ENCODE measurements at regions of chr1 and their contacts with region 1.

Region 1: DNA sequence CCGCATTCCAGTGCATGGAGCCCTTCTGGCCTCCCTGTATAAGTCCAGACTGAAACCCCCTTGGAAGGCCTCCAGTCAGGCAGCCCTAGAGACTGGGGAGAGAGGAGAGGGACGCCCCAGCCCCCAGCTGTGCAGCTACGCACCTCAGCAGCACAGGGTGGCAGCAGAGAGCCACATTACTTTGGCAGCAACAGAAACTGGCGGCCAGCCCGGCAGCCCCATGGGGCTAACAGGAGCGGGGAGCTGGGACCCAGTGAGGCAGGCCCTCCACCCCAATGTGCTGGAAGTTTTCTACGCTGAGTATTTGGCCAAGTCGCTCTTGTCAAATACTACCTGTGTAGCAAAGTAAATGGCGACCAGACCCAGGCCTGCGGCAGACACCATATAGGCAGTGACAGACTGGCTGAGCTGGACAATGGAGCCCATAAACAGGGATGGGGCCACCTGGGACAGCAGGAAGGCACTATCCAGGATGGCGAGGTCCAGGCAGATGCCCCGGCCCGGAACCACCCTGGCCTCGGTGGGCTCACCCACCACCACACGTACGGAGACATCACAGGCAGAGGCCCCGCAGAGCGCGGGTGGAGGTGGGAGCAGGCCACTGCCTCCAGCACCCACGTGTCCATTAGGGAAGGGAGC is 21.2 kb downstream of the SLC45A3 start:
- DNase-seq: peak; percentile 90
- H3K4me3 Mint-ChIP-seq: no peak overlapping the region
- H3K27ac Mint-ChIP-seq: no peak overlapping the region
- H3K4me1 Mint-ChIP-seq: peaks cover 1% of the 10 kb centered on the region
- H3K27me3 Mint-ChIP-seq: no peaks in the 10 kb centered on the region
- CTCF ChIP-seq: peak; percentile 99

Region 2: GRCh38 chr1:205344066-205344928 is 314.8 kb before region 1 on chr1:
- CTCF ChIA-PET with region 1: no interaction called
- POLR2A ChIA-PET with region 1: no interaction called
- intact Hi-C with region 1: no loop called
- DNase-seq: no peak
- H3K4me3 Mint-ChIP-seq: peak overlapping the region; percentile 50
- H3K27ac Mint-ChIP-seq: no peak overlapping the region
- H3K4me1 Mint-ChIP-seq: peaks cover 18% of the 10 kb centered on the region
- H3K27me3 Mint-ChIP-seq: peaks cover 12% of the 10 kb centered on the region
- CTCF ChIP-seq: no peak

Region 3: DNA sequence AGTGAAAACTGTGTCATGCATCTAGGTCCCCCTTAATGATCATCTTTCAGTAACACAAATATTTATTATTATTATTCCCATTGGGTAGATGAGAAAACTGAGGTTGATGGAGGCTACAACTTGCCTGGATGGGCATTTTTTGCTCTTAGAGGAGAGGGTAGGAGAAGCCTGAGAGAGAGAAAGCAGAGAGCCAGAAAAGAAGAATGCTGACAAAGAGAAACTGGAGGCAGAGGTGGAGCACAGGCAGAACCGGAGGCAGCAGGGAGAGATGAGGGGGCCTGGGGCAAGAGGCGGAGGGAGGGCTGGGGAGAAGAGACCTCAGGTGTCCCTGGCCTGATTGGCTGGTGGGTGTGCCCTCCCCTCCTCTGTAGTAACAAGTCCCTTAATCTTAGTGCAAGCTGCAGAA is 207.3 kb before region 1 on chr1:
- CTCF ChIA-PET with region 1: no interaction called
- POLR2A ChIA-PET with region 1: no interaction called
- intact Hi-C with region 1: no loop called
- DNase-seq: no peak
- H3K4me3 Mint-ChIP-seq: no peak overlapping the region
- H3K27ac Mint-ChIP-seq: no peak overlapping the region
- H3K4me1 Mint-ChIP-seq: peaks cover 45% of the 10 kb centered on the region
- H3K27me3 Mint-ChIP-seq: peaks cover 58% of the 10 kb centered on the region
- CTCF ChIP-seq: no peak

Region 4: DNA sequence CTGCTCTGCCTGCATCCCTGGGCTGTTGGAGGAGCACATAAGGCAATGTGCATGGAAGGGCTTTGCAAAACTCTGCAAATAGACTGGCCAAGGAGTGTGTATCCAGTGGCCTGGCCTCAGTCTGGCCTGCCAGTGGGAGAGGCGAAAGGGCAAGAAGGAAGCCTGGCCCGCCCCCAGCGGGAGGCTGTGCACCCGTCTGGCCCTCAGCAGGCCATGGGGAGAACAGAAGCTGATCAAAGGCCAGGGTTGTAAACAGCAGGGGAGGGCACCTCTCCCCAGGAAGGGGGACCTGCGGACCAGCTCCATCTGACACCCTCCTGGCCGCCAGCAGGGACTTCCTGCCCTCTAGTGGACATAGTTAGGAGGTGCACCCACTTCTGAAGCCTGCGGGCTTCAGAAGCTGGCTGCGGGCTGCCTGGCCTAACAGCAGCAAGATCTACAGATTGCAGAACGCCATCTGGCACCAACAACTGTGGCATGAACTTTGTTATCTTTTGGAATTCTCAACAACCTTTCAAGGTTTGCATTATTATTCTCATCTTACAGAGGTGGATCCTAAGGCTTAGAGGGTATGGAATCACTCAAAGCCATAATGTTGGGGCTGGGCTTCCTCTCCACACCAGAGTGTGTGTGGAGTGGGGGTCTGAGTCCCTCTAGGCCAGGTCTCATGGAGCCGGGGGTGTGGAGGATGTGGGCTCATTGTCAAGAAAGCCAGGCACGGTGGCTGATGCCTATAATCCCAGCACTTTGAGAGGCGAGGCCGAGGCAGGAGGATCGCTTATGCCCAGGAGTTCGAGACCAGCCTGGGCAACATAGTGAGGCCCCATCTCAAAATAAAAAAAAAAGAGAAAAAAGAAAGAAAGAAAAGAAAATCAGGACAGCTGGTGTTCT is 173.5 kb before region 1 on chr1:
- CTCF ChIA-PET with region 1: interaction called, 109 read pairs
- POLR2A ChIA-PET with region 1: no interaction called
- intact Hi-C with region 1: loop called (anchors 1 kb)
- DNase-seq: peak; percentile 88
- H3K4me3 Mint-ChIP-seq: no peak overlapping the region
- H3K27ac Mint-ChIP-seq: no peak overlapping the region
- H3K4me1 Mint-ChIP-seq: peaks cover 14% of the 10 kb centered on the region
- H3K27me3 Mint-ChIP-seq: peaks cover 42% of the 10 kb centered on the region
- CTCF ChIP-seq: peak; percentile 100

Region 5: GRCh38 chr1:205568469-205569361 is 90.3 kb before region 1 on chr1:
- CTCF ChIA-PET with region 1: interaction called, 40 read pairs
- POLR2A ChIA-PET with region 1: no interaction called
- intact Hi-C with region 1: no loop called
- DNase-seq: no peak
- H3K4me3 Mint-ChIP-seq: peak overlapping the region; percentile 26
- H3K27ac Mint-ChIP-seq: no peak overlapping the region
- H3K4me1 Mint-ChIP-seq: no peaks in the 10 kb centered on the region
- H3K27me3 Mint-ChIP-seq: peaks cover 83% of the 10 kb centered on the region
- CTCF ChIP-seq: no peak

Region 6: DNA sequence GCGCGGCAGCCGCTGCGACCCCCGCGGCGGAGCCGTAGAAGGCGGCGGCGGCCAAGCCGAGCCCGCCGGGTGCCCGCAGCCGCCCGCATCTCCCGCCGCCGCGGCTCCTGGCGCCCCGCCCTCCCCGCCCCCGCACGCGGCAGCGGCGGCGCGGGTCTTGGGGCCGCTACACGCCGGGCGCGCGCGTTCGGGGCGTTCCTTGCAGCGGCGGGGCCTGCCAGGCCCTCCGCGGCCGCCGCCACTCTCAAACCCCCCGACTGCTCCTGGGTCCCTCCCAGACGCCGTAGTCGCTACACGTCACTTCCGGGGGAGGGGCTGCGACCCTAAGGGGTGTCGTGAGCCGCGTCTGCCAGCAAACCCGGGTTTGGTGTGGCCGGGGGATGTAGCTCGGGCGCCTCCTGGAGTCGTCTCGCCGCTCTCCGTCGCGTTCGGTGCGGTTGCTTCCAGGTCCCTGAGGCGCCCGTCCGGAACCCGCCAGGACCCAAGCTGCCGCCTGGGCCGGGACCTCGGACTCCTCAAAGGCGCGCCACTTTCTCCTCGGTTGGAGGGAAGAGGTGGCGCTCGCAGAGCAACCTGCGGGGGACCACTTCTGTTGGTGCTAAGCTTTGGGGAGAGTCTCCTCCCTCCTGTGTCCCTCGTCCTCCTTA is 27.2 kb before region 1 on chr1 and contains the start of gene ELK4:
- CTCF ChIA-PET with region 1: interaction called, 381 read pairs
- POLR2A ChIA-PET with region 1: interaction called, 143 read pairs
- intact Hi-C with region 1: loop called (anchors 1 kb)
- DNase-seq: peak; percentile 100
- H3K4me3 Mint-ChIP-seq: peak within 1 kb of the TSS; percentile 90
- H3K27ac Mint-ChIP-seq: peak within 1 kb of the TSS; percentile 91
- H3K4me1 Mint-ChIP-seq: peaks cover 35% of the 10 kb centered on the region
- H3K27me3 Mint-ChIP-seq: no peaks in the 10 kb centered on the region
- CTCF ChIP-seq: peak; percentile 87
- total RNA-seq, gene ELK4: 101 and 109 TPM in 2 replicates

Region 7: DNA sequence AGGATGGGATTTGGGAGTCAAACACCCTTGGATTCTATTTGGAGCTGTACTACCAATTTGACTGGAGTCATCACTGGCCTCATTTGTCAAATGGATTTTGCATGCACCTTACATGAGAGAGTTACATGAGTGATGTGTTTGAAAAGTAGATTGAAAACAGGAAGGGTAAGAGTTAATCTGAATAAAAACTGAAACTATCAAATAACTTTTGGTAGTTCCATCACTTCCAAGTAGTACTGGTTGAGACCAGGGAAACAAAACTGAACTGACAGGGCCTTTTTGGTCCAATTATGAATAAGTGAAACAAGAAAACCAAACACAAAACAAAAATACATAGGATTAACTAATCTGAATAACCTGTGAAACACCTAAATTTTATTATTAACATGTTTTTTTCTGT is 60.7 kb after region 1 on chr1:
- CTCF ChIA-PET with region 1: interaction called, 592 read pairs
- POLR2A ChIA-PET with region 1: no interaction called
- intact Hi-C with region 1: no loop called
- DNase-seq: no peak
- H3K4me3 Mint-ChIP-seq: no peak overlapping the region
- H3K27ac Mint-ChIP-seq: no peak overlapping the region
- H3K4me1 Mint-ChIP-seq: peaks cover 10% of the 10 kb centered on the region
- H3K27me3 Mint-ChIP-seq: no peaks in the 10 kb centered on the region
- CTCF ChIP-seq: no peak

Region 8: GRCh38 chr1:205907794-205908193 is 248.7 kb after region 1 on chr1:
- CTCF ChIA-PET with region 1: interaction called, 18 read pairs
- POLR2A ChIA-PET with region 1: interaction called, 3 read pairs
- intact Hi-C with region 1: loop called (anchors 1 kb)
- DNase-seq: peak; percentile 86
- H3K4me3 Mint-ChIP-seq: no peak overlapping the region
- H3K27ac Mint-ChIP-seq: peak overlapping the region; percentile 11
- H3K4me1 Mint-ChIP-seq: peaks cover 13% of the 10 kb centered on the region
- H3K27me3 Mint-ChIP-seq: peaks cover 28% of the 10 kb centered on the region
- CTCF ChIP-seq: peak; percentile 93

Region 9: GRCh38 chr1:206106328-206107167 is 447.5 kb after region 1 on chr1:
- CTCF ChIA-PET with region 1: interaction called, 6 read pairs
- POLR2A ChIA-PET with region 1: interaction called, 3 read pairs
- intact Hi-C with region 1: loop called (anchors 1 kb)
- DNase-seq: peak; percentile 96
- H3K4me3 Mint-ChIP-seq: no peak overlapping the region
- H3K27ac Mint-ChIP-seq: no peak overlapping the region
- H3K4me1 Mint-ChIP-seq: peaks cover 9% of the 10 kb centered on the region
- H3K27me3 Mint-ChIP-seq: peaks cover 5% of the 10 kb centered on the region
- CTCF ChIP-seq: peak; percentile 99

Region 10: GRCh38 chr1:206792939-206793607 is 1134.0 kb after region 1 on chr1:
- CTCF ChIA-PET with region 1: no interaction called
- POLR2A ChIA-PET with region 1: no interaction called
- intact Hi-C with region 1: no loop called
- DNase-seq: no peak
- H3K4me3 Mint-ChIP-seq: no peak overlapping the region
- H3K27ac Mint-ChIP-seq: no peak overlapping the region
- H3K4me1 Mint-ChIP-seq: peaks cover 11% of the 10 kb centered on the region
- H3K27me3 Mint-ChIP-seq: peaks cover 8% of the 10 kb centered on the region
- CTCF ChIP-seq: no peak